Naive thymus-derived CD4-positive, alpha-beta T cell (primary cell): ENCODE measurements at regions of chr1 and their contacts with region 1.

Region 1: DNA sequence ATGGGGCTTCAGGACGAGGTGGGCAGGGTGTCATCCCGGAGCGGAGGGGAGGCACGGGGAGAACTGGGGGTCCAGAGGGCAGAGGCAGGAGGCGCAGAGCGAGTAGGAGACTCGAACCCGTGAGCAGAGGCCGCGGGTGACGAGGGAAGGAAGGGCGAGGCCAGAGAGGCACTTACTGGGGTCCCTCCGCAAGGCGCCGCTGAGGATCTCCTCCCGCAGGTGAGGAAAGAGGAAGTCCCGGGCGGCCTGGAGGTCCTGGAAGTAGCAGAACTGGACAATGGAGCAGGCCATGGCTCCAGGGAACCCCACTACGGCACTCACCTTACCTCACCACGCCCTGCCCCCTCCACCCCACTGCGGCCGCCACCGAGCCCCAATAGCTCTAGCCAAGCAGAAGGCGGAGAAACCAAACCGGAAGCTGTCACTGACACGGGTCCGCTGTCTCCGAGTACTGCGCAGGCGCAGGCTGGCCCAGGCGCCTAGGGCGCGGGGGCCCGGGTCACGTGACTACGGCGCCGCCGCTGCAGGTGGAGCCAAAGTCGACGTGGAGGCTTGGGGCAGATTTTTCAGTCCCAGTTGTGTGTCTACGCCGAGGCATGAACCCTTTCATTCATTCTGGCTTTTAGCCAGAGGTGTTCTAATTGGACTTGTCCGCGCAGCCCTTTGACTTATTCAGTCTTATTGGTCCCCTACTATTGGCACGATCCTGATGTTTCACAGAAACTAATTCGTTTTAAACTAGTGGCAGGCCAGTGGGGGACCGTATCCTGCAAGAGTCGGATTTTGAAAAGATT is at the start of gene RAB3GAP2:
- DNase-seq: peak; percentile 95 to 98 (median 97)
- ATAC-seq: peak; percentile 96
- H3K4me3 ChIP-seq: peak within 1 kb of the TSS; percentile 95
- H3K4me3 Mint-ChIP-seq: no peak within 1 kb of the TSS
- H3K27ac ChIP-seq: peak within 1 kb of the TSS; percentile 98
- H3K27ac Mint-ChIP-seq: no peak within 1 kb of the TSS
- H3K4me1 ChIP-seq: peaks cover 21 to 24% of the 10 kb centered on the region in 2 donors
- H3K4me1 Mint-ChIP-seq: peaks cover 7 to 19% (median 16%) of the 10 kb centered on the region in 7 donors
- H3K27me3 ChIP-seq: no peaks in the 10 kb centered on the region
- H3K27me3 Mint-ChIP-seq: peaks cover 0 to 16% (median 3%) of the 10 kb centered on the region in 5 donors
- total RNA-seq, gene RAB3GAP2: 36.8 to 53.0 (median 46.4) TPM

Region 2: GRCh38 chr1:219173758-219174588 is 1098.3 kb before region 1 on chr1 and contains the start of gene LYPLAL1:
- CTCF ChIA-PET with region 1: no interaction called
- POLR2A ChIA-PET with region 1: no interaction called
- intact Hi-C with region 1: loop called (anchors 2 to 5 kb)
- DNase-seq: peak; percentile 82 to 92 (median 88)
- ATAC-seq: peak; percentile 98
- H3K4me3 ChIP-seq: peak within 1 kb of the TSS; percentile 84
- H3K4me3 Mint-ChIP-seq: peak within 1 kb of the TSS; percentile 84 to 100 (median 98)
- H3K27ac ChIP-seq: peak within 1 kb of the TSS; percentile 76
- H3K27ac Mint-ChIP-seq: peak within 1 kb of the TSS; percentile 96 to 99 (median 97)
- H3K4me1 ChIP-seq: peaks cover 15 to 18% of the 10 kb centered on the region in 2 donors
- H3K4me1 Mint-ChIP-seq: peaks cover 34 to 55% (median 50%) of the 10 kb centered on the region in 7 donors
- H3K27me3 ChIP-seq: no peaks in the 10 kb centered on the region
- H3K27me3 Mint-ChIP-seq: peaks cover 0 to 5% (median 0%) of the 10 kb centered on the region in 5 donors
- total RNA-seq, gene LYPLAL1: 12.2 to 24.1 (median 20.4) TPM

Region 3: DNA sequence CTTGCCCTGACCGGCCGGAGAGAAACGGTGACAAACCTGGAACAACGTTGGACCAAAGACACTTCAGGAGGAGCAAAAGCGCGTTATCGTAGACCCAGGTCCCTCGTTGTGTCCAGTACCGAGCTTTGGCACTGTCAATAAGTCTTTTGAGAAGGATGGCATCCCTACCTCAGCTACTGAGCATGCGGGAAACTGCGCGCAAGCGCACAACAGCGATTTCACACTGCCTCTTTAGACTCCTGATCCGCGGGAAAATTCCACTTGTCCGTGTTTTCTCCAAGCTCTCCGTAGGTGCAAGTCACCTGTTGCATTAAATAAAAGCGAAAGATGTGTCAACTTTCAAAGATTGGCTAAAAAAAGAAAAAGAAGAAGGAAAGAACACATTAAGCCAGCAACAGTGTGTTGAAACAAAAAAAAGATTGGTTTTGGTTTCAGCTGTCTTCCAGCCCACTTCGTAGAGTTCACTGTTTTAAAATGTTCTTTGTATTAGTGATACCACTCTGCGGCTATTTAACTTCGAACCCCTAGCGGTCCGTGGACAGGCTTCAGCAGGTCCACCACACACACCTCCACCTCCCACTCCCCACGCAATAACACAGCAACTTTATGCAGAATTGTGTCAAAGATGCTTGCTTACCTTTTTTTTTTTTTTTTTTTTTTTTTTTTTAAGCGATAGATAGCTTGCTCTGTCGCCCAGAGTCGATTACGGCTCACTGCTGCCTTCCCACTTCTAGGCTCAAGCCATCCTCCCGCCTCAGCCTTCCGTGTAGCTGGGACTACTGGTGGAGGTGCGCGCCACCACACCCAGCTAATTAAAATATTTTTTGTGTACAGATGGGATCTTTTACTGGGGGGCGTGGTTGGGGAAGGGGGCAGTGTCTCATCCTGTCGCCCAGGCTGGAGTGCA is 182.3 kb before region 1 on chr1 and contains the start of gene BPNT1:
- CTCF ChIA-PET with region 1: no interaction called
- POLR2A ChIA-PET with region 1: interaction called, 3 read pairs
- intact Hi-C with region 1: loop called (anchors 1 kb)
- DNase-seq: peak; percentile 90 to 99 (median 97)
- ATAC-seq: peak; percentile 87
- H3K4me3 ChIP-seq: peak within 1 kb of the TSS; percentile 83
- H3K4me3 Mint-ChIP-seq: peak within 1 kb of the TSS; percentile 88 to 100 (median 94)
- H3K27ac ChIP-seq: peak within 1 kb of the TSS; percentile 72
- H3K27ac Mint-ChIP-seq: peak within 1 kb of the TSS; percentile 86 to 97 (median 94)
- H3K4me1 ChIP-seq: peaks cover 9 to 13% of the 10 kb centered on the region in 2 donors
- H3K4me1 Mint-ChIP-seq: peaks cover 0 to 42% (median 36%) of the 10 kb centered on the region in 7 donors
- H3K27me3 ChIP-seq: no peaks in the 10 kb centered on the region
- H3K27me3 Mint-ChIP-seq: peaks cover 0 to 2% (median 0%) of the 10 kb centered on the region in 5 donors
- total RNA-seq, gene BPNT1: 5.5 to 24.6 (median 15.0) TPM

Region 4: GRCh38 chr1:220255204-220255603 is 17.0 kb before region 1 on chr1:
- CTCF ChIA-PET with region 1: no interaction called
- POLR2A ChIA-PET with region 1: no interaction called
- intact Hi-C with region 1: loop called in 1 of 2 experiments (anchors 2 kb)
- DNase-seq: no peak
- ATAC-seq: no peak
- H3K4me3 ChIP-seq: no peak overlapping the region
- H3K4me3 Mint-ChIP-seq: no peak overlapping the region
- H3K27ac ChIP-seq: no peak overlapping the region
- H3K27ac Mint-ChIP-seq: peak overlapping the region in 2 of 9 donors; percentile 2 to 46
- H3K4me1 ChIP-seq: no peaks in the 10 kb centered on the region
- H3K4me1 Mint-ChIP-seq: peaks cover 26 to 51% (median 43%) of the 10 kb centered on the region in 7 donors
- H3K27me3 ChIP-seq: no peaks in the 10 kb centered on the region
- H3K27me3 Mint-ChIP-seq: no peaks in the 10 kb centered on the region